ENCODE measurements at regions of chr1 and their contacts with region 1.

Region 1: GRCh38 chr1:110495926-110496600 is 22.9 kb downstream of the KCNA10 start:
- DNase-seq: peak; percentile 83
- CTCF ChIP-seq: peak; percentile 94

Region 2: DNA sequence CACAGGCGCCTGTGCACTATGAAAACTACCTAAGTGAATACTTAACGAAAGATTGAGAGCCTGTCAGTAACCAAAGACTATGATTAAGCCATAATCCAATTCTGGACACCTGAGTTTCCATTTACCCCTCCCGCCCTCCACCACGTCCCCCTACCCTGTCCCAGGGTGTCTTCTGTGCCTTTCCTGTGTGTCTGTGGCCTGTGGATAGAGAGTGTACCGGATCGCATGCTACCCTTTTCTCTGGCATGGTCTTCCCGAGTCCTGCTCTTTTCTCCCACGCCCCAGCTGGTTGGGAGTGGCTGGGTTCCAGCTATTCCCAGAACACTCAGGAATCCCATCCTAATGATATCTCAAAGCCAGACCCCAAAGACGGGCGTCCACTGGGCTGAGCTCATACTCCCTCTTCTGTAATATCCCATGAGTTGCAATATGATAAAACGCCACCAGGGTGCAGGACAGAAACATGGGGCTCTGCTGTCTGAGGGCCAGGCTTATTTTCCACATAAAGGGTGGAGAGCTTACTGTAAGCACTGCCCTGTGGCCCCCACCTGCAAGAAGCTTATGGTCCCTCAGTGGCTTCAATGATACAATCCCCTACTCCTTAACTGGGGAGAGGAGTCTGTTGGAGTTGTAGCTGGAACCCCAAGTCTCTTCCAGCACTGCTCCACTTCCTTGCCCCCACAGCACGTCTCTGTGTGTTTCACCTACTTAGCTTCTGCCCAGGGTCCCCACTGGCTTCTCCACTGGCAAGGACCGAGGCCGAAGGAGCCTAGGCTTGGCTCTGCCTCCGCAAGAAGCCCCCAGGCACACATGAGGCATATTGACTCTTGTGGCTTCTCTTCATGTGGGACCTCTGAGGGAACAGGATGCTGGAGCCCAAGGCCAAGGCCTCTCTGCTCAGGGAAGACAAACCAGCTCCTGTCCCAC is 408.0 kb before region 1 on chr1:
- CTCF ChIA-PET with region 1: interaction called, 10 read pairs
- POLR2A ChIA-PET with region 1: no interaction called
- DNase-seq: peak; percentile 78
- CTCF ChIP-seq: peak; percentile 71

Region 3: GRCh38 chr1:110196917-110197765 is 298.9 kb before region 1 on chr1:
- CTCF ChIA-PET with region 1: interaction called, 114 read pairs
- POLR2A ChIA-PET with region 1: no interaction called
- DNase-seq: peak; percentile 88
- CTCF ChIP-seq: peak; percentile 95

Region 4: GRCh38 chr1:110338886-110339406 is 157.1 kb before region 1 on chr1 and contains the start of gene RBM15:
- CTCF ChIA-PET with region 1: interaction called, 16 read pairs
- POLR2A ChIA-PET with region 1: interaction called, 3 read pairs
- DNase-seq: peak; percentile 96
- CTCF ChIP-seq: no peak

Region 5: DNA sequence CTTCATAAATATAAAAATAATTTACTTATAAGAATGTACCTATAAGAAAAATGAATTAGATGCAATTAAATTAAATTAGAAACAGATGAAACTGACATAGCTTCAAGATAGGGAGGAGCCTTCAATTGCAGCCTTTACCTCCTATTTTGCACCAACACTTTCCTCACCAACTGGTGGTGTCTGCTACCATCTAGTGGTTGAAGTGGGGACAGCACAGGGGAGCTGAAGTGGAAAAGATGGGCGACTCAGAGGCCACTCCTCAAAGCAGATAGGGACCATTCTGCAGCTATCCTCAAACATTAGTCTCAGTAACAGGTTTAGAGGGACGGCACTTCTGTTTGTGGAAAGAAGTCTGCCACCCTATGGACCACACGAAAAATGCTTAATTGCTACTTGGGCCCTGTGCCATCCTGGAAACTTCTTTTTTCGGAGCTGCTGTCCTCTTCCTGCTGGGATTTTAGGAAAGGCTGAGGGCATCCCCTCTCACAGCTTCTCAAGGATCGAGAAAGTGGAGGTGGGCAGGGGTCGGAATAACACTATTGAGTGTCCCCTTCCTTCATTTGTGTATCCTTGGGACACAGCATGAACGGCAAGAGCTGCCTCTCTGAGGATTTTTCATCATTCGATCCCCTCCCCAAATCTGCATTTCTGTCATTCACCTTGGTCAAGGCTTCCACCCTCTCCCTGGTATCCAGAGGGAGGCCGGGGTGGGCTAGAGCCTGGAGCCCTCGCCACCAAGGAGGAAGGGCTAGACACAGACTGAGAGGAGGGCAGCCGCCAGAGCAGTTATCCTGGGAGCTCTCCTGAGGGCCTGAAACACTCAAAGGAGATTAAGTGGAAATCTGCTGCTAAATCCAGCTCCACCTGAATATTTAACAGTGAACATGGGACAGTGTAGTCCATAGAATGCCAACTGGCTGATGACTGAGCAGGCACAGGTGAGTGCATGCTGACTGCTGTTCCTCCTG is 35.5 kb before region 1 on chr1:
- CTCF ChIA-PET with region 1: interaction called, 39 read pairs
- POLR2A ChIA-PET with region 1: no interaction called
- DNase-seq: peak; percentile 82
- CTCF ChIP-seq: peak; percentile 97

Region 6: DNA sequence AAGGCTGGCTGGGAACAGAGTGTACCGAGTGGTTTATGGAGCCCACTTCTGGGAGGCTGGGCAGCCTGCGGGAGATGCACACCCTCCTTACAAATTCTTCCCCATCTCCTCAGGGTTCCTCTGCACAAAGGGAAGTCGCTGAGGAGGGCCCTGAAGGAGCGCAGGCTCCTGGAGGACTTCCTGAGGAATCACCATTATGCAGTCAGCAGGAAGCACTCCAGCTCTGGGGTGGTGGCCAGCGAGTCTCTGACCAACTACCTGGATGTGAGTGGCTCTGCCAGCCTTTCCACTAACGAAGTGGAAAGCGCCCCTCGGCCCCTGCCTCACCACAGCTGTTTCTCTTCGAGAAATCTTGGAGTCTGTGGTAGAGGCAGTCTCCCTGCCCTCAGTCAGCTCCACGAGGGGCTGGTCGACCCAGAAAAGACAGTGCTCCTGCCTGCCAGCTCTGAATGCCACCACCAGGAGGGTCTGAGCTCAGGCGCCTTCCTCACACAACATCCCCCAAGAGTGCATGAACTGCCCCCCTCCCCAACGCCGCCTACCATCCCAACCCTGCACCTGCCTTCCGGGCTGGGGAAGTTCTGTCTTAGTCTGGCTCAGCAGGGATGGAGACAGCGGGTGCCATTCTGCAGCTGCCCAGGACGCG is 13.3 kb before region 1 on chr1:
- CTCF ChIA-PET with region 1: interaction called, 33 read pairs
- POLR2A ChIA-PET with region 1: no interaction called
- DNase-seq: no peak
- CTCF ChIP-seq: no peak

Region 7: DNA sequence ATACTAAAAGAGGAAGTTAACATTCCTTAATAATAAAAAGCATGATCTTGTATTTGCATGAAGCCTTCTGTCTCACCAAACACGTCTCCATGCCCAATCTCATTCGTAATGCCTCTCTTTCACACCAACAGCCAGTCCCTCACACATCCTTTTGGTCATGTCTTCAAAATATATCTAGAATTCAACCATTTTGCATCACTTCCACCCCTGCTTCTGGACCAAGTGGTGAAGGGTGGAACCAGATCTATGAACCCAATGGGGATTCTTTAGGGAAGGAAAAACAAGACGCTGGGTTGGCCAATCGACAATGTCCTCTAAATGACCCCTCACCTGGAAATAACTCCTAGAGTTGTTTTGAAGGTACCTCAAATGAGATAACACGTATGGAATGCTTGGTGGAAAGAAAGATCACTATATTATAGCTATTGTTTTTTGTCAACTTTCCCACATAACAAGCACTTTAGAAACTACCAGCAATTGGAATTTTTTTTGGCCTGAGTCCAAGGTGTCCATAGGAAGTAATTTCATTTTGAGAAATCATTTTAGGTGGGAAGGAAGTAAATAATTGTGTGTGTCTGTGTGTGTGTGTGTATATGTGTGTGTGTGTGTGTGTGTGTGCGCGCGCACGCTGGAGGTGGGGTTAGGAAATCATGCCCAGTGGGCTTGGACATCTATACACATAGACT is 23.2 kb after region 1 on chr1 and contains the start of gene KCNA10:
- CTCF ChIA-PET with region 1: interaction called, 15 read pairs
- POLR2A ChIA-PET with region 1: no interaction called
- DNase-seq: no peak
- CTCF ChIP-seq: no peak

Region 8: DNA sequence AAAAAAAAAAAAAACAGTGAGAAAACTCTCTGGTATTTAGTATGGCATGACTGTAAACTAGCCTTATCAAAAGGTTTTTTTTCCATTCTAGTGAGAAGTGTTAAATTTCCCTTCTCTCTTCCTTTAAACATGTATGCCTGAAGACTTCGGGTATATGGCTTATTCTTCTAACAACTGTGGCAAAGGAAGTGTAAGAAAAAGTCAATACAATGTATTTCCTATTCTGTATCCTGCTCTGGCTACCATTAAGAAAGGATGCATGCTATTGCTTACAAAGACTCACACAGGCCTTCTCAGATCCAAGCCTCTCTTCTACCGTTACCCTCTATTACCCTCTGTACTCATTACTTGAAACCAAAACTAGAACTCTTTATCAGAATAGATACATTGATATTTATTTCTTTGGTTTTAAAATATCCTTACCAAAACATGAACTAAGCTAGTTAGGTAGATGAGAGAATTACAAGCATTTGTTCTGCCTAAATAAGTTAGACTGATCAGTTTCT is 652.4 kb after region 1 on chr1:
- CTCF ChIA-PET with region 1: no interaction called
- POLR2A ChIA-PET with region 1: no interaction called
- DNase-seq: no peak
- CTCF ChIP-seq: no peak

Measured in GM10248 (cell line).